ENCODE measurements at regions of chr15 and their contacts with region 1.

Region 1: DNA sequence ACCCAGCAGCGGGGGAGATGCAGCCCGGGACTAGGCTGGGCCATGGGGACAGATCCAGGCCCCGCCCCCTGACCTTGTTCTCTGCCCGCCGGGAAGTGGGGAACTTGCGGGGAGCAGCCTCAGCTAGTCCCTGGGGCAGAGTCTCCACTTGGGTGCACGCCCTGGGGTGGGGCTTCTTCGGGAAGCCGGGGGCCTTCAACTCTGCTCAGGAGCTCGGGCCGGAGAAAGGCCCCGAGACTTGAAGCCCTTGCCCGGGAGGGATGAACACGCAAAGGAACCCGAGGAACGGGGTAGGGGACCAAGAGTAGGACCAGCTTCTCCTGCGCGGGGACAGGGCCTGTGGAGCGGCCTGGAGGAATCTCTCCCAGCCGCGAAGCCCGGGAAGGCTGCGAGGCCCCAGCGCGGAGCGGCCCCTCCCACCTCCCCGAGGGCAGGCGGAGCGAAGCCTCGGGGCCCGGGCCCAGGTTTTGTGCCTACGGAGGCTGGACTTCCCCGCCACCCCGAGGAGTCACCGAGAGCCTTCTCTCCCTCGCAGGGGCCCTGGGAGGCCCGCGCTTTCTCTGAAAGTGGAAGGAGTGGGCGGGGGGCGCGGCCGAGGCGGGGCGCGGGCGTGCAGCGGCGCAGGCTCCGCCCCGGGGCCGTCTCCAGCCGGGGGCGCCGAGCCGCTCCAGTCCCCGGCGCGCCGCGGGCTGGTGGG is at the start of gene ITPKA:
- DNase-seq: peak; percentile 78
- H3K4me3 Mint-ChIP-seq: peak within 1 kb of the TSS; percentile 76
- H3K27ac Mint-ChIP-seq: peak within 1 kb of the TSS; percentile 79
- H3K4me1 Mint-ChIP-seq: peaks cover 38% of the 10 kb centered on the region
- H3K27me3 Mint-ChIP-seq: peaks cover 16% of the 10 kb centered on the region
- total RNA-seq, gene ITPKA: 2.8 and 3.1 TPM in 2 replicates

Region 2: GRCh38 chr15:41283653-41284426 is 209.5 kb before region 1 on chr15:
- intact Hi-C with region 1: loop called (anchors 5 kb)
- DNase-seq: peak; percentile 96
- H3K4me3 Mint-ChIP-seq: peak overlapping the region; percentile 97
- H3K27ac Mint-ChIP-seq: peak overlapping the region; percentile 92
- H3K4me1 Mint-ChIP-seq: peaks cover 51% of the 10 kb centered on the region
- H3K27me3 Mint-ChIP-seq: no peaks in the 10 kb centered on the region

Region 3: GRCh38 chr15:41465822-41466421 is 27.4 kb before region 1 on chr15:
- intact Hi-C with region 1: loop called (anchors 2 kb)
- DNase-seq: no peak
- H3K4me3 Mint-ChIP-seq: no peak overlapping the region
- H3K27ac Mint-ChIP-seq: no peak overlapping the region
- H3K4me1 Mint-ChIP-seq: peaks cover 15% of the 10 kb centered on the region
- H3K27me3 Mint-ChIP-seq: no peaks in the 10 kb centered on the region

Region 4: GRCh38 chr15:41544650-41545015 is 51.3 kb after region 1 on chr15:
- intact Hi-C with region 1: loop called (anchors 1 kb)
- DNase-seq: no peak
- H3K4me3 Mint-ChIP-seq: peak overlapping the region; percentile 97
- H3K27ac Mint-ChIP-seq: no peak overlapping the region
- H3K4me1 Mint-ChIP-seq: peaks cover 17% of the 10 kb centered on the region
- H3K27me3 Mint-ChIP-seq: no peaks in the 10 kb centered on the region

Region 5: DNA sequence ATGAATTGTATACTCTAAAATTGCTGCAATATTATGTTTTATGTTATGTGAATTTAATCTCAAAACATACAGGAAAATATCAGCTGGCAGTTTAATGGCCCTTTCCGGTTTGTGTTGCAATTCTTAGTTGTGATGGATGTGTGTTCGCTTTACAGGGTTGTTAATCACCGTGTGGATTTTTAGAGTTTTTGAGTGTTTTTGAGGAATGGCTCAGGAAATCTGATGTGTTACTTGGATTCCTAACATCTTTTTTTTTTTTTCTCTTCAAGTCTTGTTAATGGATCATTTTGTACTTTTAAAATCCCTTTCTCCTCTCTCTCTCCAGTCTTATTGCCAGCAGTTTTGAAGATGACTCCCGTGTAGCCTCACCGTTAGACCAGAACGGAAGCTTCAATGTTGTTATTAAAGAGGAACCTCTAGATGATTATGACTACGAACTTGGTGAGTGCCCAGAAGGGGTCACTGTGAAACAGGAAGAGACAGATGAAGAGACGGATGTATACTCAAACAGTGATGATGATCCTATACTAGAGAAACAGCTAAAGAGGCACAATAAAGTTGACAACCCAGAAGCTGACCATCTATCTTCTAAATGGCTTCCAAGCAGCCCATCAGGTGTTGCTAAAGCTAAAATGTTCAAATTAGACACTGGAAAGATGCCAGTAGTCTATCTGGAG is 202.5 kb after region 1 on chr15:
- intact Hi-C with region 1: loop called (anchors 10 kb)
- DNase-seq: peak; percentile 34
- H3K4me3 Mint-ChIP-seq: peak overlapping the region; percentile 28
- H3K27ac Mint-ChIP-seq: peak overlapping the region; percentile 81
- H3K4me1 Mint-ChIP-seq: peaks cover 38% of the 10 kb centered on the region
- H3K27me3 Mint-ChIP-seq: no peaks in the 10 kb centered on the region

Region 6: GRCh38 chr15:41930221-41930866 is 437.0 kb after region 1 on chr15:
- intact Hi-C with region 1: loop called (anchors 10 kb)
- DNase-seq: no peak
- H3K4me3 Mint-ChIP-seq: no peak overlapping the region
- H3K27ac Mint-ChIP-seq: no peak overlapping the region
- H3K4me1 Mint-ChIP-seq: peaks cover 60% of the 10 kb centered on the region
- H3K27me3 Mint-ChIP-seq: no peaks in the 10 kb centered on the region

Measured in activated T-helper 1 cell treated with anti-CD3 and anti-CD28 coated beads, Interleukin-12 subunit alpha, Interleukin-12 subunit beta, Interleukin-2, Interleukin-4 antibody, amounts not matched to agents 30 ng/mL and 10 ng/mL and 1 ng/mL, durations not matched to agents 14 hours and 24 hours and 36 hours (primary cell).